Heart left ventricle (tissue), 16 donors: ENCODE measurements at regions of chr16 and their contacts with region 1.

Region 1: GRCh38 chr16:10737068-10737625 is 6.5 kb upstream of the NUBP1 start:
- DNase-seq: peak in 4 of 5 donors; percentile 44 to 68 (median 63)
- ATAC-seq: peak; percentile 19 to 63 (median 55)
- H3K4me3 ChIP-seq: peak overlapping the region in 6 of 12 donors; percentile 2 to 22 (median 10)
- H3K27ac ChIP-seq: peak overlapping the region in 11 of 12 donors; percentile 68 to 94 (median 85)
- H3K4me1 ChIP-seq: peaks cover 5 to 24% (median 18%) of the 10 kb centered on the region in 12 donors
- H3K27me3 ChIP-seq: no peaks in the 10 kb centered on the region
- CTCF ChIP-seq: peak; percentile 88 to 96 (median 94)
- POLR2A ChIP-seq: no peak

Region 2: GRCh38 chr16:10256784-10257641 is 480.1 kb before region 1 on chr16:
- intact Hi-C with region 1: loop called in 8 of 10 experiments (anchors 2 to 10 kb)
- DNase-seq: peak in 2 of 5 donors; percentile 25 to 27
- ATAC-seq: peak in 2 of 4 donors; percentile 58 to 76
- H3K4me3 ChIP-seq: no peak overlapping the region
- H3K27ac ChIP-seq: no peak overlapping the region
- H3K4me1 ChIP-seq: peaks cover 0 to 11% (median 0%) of the 10 kb centered on the region in 12 donors
- H3K27me3 ChIP-seq: peaks cover 0 to 15% (median 0%) of the 10 kb centered on the region in 9 donors
- CTCF ChIP-seq: peak; percentile 59 to 84 (median 73)
- POLR2A ChIP-seq: no peak

Region 3: DNA sequence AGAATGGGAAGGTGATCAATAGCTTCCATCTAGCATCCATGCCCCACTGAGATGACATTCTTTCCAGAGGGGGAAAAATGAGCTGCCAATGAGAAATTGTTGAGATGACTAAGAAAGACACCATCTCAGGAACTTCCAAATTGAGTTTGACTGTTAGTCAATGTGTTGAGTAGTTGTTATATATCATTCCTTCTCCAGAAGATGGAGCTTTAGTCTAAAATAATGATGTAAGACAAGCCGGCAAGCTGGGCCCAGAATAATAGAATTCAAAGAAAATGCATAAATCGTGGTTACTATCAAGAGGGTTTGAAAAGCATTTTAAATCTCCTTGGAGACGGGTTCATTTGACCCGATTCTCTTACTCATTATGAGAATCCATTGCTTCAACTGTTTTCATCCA is 422.3 kb before region 1 on chr16:
- intact Hi-C with region 1: loop called in 5 of 10 experiments (anchors 5 to 10 kb)
- DNase-seq: no peak
- ATAC-seq: no peak
- H3K4me3 ChIP-seq: no peak overlapping the region
- H3K27ac ChIP-seq: no peak overlapping the region
- H3K4me1 ChIP-seq: no peaks in the 10 kb centered on the region
- H3K27me3 ChIP-seq: no peaks in the 10 kb centered on the region
- CTCF ChIP-seq: peak in 9 of 12 donors; percentile 12 to 55 (median 41)
- POLR2A ChIP-seq: no peak

Region 4: GRCh38 chr16:10385725-10386516 is 351.2 kb before region 1 on chr16 and contains the start of gene ATF7IP2:
- intact Hi-C with region 1: loop called in 1 of 10 experiments (anchors 10 kb)
- DNase-seq: peak; percentile 92 to 96 (median 95)
- ATAC-seq: peak; percentile 98 to 100 (median 99)
- H3K4me3 ChIP-seq: peak within 1 kb of the TSS; percentile 40 to 88 (median 78)
- H3K27ac ChIP-seq: peak within 1 kb of the TSS; percentile 63 to 91 (median 88)
- H3K4me1 ChIP-seq: peaks cover 0 to 21% (median 9%) of the 10 kb centered on the region in 12 donors
- H3K27me3 ChIP-seq: no peaks in the 10 kb centered on the region
- CTCF ChIP-seq: no peak
- POLR2A ChIP-seq: peak; percentile 61 to 91
- total RNA-seq, gene ATF7IP2: 34.4 to 51.8 (median 43.2) TPM

Region 5: DNA sequence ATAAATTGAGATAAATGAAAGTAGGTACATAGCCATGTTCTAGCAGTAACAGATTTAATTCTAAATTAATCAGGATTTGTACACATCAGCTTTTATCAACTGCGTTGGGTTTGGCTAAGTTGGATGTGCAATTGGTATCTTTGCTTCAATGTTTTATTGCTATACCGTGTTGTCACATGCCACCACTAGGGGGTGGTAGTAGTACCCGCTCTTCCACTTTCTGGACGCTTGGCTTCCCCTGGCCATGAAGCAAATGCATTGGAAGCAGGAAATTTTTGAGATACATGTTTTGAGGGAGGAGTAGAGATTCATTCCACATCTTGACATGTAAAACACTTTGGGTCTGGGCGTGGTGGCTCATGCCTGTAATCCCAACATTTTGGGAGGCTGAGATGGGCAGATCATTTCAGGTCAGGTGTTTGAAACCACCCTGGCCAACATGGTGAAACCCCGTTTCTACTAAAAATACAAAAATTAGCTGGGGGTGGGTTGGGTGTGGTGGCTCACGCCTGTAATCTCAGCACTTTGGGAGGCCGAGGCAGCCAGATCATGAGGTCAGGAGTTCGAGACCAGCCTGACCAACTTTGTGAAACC is 215.4 kb before region 1 on chr16:
- intact Hi-C with region 1: loop called in 4 of 10 experiments (anchors 1 to 5 kb)
- DNase-seq: peak in 4 of 5 donors; percentile 48 to 60 (median 55)
- ATAC-seq: peak; percentile 57 to 87 (median 70)
- H3K4me3 ChIP-seq: no peak overlapping the region
- H3K27ac ChIP-seq: no peak overlapping the region
- H3K4me1 ChIP-seq: no peaks in the 10 kb centered on the region
- H3K27me3 ChIP-seq: no peaks in the 10 kb centered on the region
- CTCF ChIP-seq: peak; percentile 64 to 93 (median 80)
- POLR2A ChIP-seq: no peak

Region 6: DNA sequence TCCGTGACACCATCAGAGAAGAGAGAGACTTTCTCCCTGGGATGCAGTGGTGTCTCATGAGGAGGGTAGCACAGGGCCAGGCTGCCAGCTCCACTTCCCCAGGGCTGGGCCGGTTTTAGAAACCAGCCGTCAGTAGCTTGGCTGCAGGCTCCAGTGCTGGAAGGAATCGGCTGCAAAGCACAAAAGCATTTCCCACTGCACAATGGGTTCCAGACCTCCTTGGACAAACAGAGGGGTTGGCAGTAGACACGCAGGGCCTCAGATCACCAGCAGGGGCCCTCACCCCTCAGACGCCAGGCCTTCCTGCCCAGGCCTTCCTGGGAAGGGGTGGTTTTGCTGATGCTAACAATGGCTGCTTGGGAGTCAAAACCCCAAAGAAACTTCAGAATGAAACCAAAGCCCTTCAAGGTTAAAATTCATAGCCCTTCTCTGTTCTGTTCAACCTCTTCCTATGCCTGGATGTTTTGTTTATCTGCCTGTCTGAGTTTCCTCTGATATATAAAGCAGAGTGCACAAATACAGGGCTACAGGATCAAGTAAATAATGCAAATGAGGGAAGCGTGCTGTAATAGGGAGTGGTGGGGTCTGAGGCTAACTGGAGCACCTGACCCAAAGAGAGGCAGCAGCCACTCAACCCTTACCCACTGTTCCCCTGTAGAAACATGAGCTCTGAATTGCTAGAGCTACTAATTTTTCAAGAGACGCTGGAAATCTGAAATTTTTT is 68.7 kb before region 1 on chr16:
- intact Hi-C with region 1: loop called in 1 of 10 experiments (anchors 2 kb)
- DNase-seq: no peak
- ATAC-seq: peak; percentile 47 to 62 (median 54)
- H3K4me3 ChIP-seq: no peak overlapping the region
- H3K27ac ChIP-seq: no peak overlapping the region
- H3K4me1 ChIP-seq: peaks cover 0 to 3% (median 0%) of the 10 kb centered on the region in 12 donors
- H3K27me3 ChIP-seq: no peaks in the 10 kb centered on the region
- CTCF ChIP-seq: peak; percentile 19 to 57 (median 40)
- POLR2A ChIP-seq: no peak

Region 7: DNA sequence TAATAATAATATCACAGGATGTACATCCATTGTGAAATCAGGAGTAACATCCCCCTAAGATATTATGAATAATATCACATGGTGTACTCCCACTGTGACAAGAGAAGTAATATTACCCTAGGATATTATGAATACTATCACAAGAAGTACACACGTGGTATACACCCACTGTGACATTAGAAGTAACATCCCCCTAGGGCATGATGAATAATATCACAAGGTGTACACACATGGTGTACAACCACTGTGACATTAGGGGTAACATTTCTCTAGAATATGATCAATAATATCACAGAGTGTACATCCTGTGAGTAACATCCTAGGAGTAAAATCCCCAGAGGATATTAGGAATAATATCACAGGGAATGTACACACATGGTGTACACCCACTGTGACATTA is 37.4 kb before region 1 on chr16:
- intact Hi-C with region 1: no loop called
- DNase-seq: no peak
- ATAC-seq: no peak
- H3K4me3 ChIP-seq: no peak overlapping the region
- H3K27ac ChIP-seq: no peak overlapping the region
- H3K4me1 ChIP-seq: no peaks in the 10 kb centered on the region
- H3K27me3 ChIP-seq: no peaks in the 10 kb centered on the region
- CTCF ChIP-seq: no peak
- POLR2A ChIP-seq: no peak